OCI-LY7 (cell line): ENCODE measurements at regions of chr3 and their contacts with region 1.

Region 1: DNA sequence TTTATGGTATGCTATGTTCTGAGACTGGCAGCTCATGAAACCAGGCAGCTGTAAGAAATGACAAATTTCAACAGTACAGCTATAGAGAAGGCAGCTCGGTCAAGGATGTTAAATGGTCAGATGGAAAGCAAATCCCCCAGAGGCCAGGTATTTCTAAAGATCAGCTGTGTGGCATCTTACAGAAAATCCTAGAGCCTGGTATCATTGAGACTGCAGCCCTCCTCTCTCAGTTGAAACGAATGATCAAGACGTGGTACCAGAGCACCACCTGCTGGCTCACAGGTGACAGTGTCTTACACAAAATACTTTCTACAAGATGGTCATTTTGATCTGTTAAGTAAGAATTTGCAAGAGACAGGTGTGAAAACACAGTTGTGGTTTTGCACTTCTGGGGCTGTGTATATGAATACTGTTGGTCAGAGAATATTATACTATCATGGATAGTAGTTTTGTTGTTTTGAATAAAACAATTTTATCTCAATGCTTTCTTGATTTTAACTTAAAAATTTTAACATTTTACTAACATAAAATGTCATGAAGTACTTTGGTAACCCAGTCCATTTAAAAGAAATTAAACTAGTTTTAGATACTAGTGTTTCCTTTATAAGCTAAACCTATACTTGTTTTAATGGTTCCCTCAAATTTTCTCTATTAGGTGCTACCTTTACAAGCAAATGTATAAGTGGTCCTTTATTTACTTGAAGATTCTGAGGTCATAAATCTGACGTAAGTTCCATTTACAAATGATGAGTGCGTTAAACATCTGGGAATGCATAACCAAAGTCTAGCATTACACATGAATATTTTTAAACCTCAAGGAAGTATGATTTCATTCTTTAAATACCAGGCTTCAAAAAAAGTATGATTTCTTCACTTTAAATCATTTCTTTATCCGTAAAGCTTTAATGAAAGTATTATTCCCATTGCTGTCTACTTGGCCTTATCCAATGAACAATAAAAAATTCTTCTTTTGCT is 121.8 kb downstream of the PDZRN3 start:
- DNase-seq: peak; percentile 68
- H3K4me3 ChIP-seq: no peak overlapping the region
- H3K27ac ChIP-seq: no peak overlapping the region
- H3K4me1 ChIP-seq: no peaks in the 10 kb centered on the region
- CTCF ChIP-seq: peak; percentile 89

Region 2: GRCh38 chr3:72938471-72939265 is 564.2 kb before region 1 on chr3:
- CTCF ChIA-PET with region 1: no interaction called
- POLR2A ChIA-PET with region 1: no interaction called
- intact Hi-C with region 1: loop called (anchors 5 kb)
- DNase-seq: peak; percentile 59
- H3K4me3 ChIP-seq: no peak overlapping the region
- H3K27ac ChIP-seq: no peak overlapping the region
- H3K4me1 ChIP-seq: no peaks in the 10 kb centered on the region
- CTCF ChIP-seq: peak; percentile 81

Region 3: DNA sequence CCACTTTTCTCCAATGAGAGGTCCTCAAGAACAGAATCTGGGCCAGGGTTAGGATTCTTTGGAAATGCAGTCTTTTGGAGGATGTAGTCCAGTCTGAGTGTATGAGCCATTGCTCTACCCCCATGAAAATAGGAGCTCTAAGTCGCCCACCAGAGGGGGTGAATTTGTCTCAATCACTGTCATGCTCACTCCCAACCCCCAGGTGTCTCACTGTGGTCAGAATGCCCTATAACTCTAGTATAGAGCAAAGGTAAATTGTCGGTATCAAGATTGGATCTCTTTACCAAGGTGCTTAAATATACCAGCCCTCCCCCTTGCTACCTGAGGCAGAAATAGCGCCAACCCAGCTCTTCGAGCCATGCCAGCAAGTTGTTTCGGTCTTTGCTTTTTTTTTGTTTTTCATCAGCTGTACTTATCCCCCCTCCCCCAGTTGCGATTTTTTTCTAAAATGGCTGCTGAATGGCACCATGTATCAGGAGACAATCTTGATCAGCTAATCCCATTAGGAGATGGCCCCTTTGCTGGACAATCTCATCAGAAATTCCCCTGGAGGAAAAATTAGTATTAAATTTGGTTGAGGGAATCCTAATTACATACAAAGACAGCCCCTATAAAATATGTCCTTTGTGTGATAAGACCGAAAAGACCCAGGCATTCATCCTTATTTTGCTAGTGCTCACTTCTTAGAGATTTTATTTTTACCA is 310.7 kb before region 1 on chr3:
- CTCF ChIA-PET with region 1: interaction called, 4 read pairs
- POLR2A ChIA-PET with region 1: no interaction called
- intact Hi-C with region 1: loop called (anchors 2 kb)
- DNase-seq: peak; percentile 10
- H3K4me3 ChIP-seq: no peak overlapping the region
- H3K27ac ChIP-seq: no peak overlapping the region
- H3K4me1 ChIP-seq: no peaks in the 10 kb centered on the region
- CTCF ChIP-seq: peak; percentile 69

Region 4: GRCh38 chr3:73432023-73432705 is 70.7 kb before region 1 on chr3:
- CTCF ChIA-PET with region 1: interaction called, 3 read pairs
- POLR2A ChIA-PET with region 1: no interaction called
- intact Hi-C with region 1: loop called (anchors 1 kb)
- DNase-seq: peak; percentile 52
- H3K4me3 ChIP-seq: no peak overlapping the region
- H3K27ac ChIP-seq: no peak overlapping the region
- H3K4me1 ChIP-seq: no peaks in the 10 kb centered on the region
- CTCF ChIP-seq: peak; percentile 90

Region 5: GRCh38 chr3:73484656-73485248 is 18.1 kb before region 1 on chr3:
- CTCF ChIA-PET with region 1: interaction called, 6 read pairs
- POLR2A ChIA-PET with region 1: interaction called, 11 read pairs
- intact Hi-C with region 1: no loop called
- DNase-seq: peak; percentile 4
- H3K4me3 ChIP-seq: peak overlapping the region; percentile 8
- H3K27ac ChIP-seq: no peak overlapping the region
- H3K4me1 ChIP-seq: peaks cover 17% of the 10 kb centered on the region
- CTCF ChIP-seq: no peak

Region 6: DNA sequence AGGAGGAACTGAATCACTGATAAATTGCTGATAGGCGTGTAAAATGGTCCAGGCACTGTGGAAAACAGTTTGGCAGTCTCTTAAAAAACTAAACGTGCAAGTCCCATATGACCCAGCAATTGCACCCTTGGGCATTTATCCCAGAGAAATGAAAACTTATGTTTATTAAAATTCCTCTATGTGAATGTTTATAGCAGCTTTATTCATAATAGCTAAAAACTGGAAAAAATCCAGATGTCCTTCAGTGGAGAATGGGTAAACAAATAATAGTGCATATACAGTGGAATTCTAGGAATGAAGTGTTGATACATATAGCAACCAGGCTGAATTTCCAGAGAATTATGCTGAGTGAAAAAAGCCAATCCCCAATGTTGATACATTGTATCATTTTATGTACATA is 604.0 kb after region 1 on chr3:
- CTCF ChIA-PET with region 1: no interaction called
- POLR2A ChIA-PET with region 1: no interaction called
- intact Hi-C with region 1: no loop called
- DNase-seq: no peak
- H3K4me3 ChIP-seq: no peak overlapping the region
- H3K27ac ChIP-seq: no peak overlapping the region
- H3K4me1 ChIP-seq: no peaks in the 10 kb centered on the region
- CTCF ChIP-seq: no peak